Thyroid gland (tissue), 4 donors: ENCODE measurements at regions of chr16 and their contacts with region 1.

Region 1: GRCh38 chr16:77660311-77660710 is 62.0 kb upstream of the NUDT7 start:
- DNase-seq: peak; percentile 7 to 28
- H3K4me3 ChIP-seq: no peak overlapping the region
- H3K27ac ChIP-seq: no peak overlapping the region
- H3K4me1 ChIP-seq: peaks cover 0 to 5% of the 10 kb centered on the region in 2 donors
- H3K27me3 ChIP-seq: no peaks in the 10 kb centered on the region
- CTCF ChIP-seq: peak in 4 of 6 experiments; percentile 51 to 80 (median 68)
- POLR2A ChIP-seq: no peak

Region 2: DNA sequence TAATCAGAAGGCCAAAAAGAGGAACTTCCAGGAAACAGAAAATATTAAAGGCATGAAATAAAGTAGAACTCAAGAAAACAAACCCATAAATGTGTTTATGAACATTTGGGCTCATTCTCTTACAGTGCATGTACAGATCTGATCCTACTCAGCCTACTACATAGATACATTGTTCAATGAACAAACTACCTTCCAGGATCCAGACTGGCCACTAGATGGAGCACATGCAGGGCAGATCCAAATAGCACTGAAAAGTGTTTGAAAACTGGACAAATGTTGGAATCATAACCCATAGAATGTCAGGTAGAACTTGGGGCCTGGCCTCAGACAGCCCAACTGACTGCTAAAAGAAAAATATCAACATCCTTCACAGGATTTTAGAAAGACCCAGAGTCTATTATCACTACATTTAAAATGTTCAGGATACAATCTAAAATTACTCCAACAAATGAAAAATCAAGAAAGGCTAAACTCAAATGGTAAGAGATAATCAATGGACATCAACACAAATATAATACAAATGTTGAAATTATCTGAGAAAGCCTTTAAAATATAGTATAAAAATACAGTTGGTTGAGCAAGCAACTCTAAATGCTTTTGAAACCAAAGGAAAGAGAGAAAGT is 60.4 kb before region 1 on chr16:
- intact Hi-C with region 1: loop called (anchors 5 kb)
- DNase-seq: peak; percentile 55 to 67
- H3K4me3 ChIP-seq: no peak overlapping the region
- H3K27ac ChIP-seq: no peak overlapping the region
- H3K4me1 ChIP-seq: no peaks in the 10 kb centered on the region
- H3K27me3 ChIP-seq: no peaks in the 10 kb centered on the region
- CTCF ChIP-seq: peak; percentile 27 to 78 (median 66)
- POLR2A ChIP-seq: no peak

Region 3: DNA sequence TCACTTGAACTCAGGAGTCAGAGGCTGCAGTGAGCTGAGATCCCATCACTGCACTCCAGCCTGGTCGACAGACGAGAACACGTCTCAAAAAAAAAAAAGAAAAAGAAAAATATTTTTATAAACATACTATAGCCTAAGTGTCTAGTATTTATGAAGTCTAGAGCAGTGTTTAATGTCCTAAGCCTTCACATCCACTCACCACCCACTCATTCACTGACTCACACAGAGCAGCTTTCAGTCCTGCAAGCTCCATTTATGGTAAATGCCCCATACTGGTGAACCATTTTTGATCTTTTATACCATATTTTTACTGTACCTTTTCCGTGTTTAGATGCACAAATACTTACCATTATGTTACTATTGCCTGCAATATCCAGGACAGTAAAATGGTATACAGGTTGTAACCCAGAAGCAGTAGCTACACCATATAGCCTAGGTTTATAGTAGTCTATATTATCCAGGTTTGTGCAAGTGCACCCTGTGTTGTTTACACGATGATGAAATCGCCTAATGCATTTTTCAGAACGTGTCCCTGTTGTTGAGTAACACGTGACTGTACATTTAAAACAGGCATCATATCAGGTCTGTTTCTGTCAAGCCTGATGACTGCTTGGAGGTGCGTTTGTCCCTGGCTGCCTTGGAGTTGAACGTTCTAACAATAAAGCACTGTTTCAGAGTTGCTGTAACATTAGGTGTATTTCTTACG is 72.1 kb after region 1 on chr16:
- intact Hi-C with region 1: no loop called
- DNase-seq: no peak
- H3K4me3 ChIP-seq: no peak overlapping the region
- H3K27ac ChIP-seq: no peak overlapping the region
- H3K4me1 ChIP-seq: peaks cover 0 to 2% of the 10 kb centered on the region in 2 donors
- H3K27me3 ChIP-seq: no peaks in the 10 kb centered on the region
- CTCF ChIP-seq: no peak
- POLR2A ChIP-seq: no peak